MCF 10A (cell line): ENCODE measurements at regions of chr12 and their contacts with region 1.

Region 1: DNA sequence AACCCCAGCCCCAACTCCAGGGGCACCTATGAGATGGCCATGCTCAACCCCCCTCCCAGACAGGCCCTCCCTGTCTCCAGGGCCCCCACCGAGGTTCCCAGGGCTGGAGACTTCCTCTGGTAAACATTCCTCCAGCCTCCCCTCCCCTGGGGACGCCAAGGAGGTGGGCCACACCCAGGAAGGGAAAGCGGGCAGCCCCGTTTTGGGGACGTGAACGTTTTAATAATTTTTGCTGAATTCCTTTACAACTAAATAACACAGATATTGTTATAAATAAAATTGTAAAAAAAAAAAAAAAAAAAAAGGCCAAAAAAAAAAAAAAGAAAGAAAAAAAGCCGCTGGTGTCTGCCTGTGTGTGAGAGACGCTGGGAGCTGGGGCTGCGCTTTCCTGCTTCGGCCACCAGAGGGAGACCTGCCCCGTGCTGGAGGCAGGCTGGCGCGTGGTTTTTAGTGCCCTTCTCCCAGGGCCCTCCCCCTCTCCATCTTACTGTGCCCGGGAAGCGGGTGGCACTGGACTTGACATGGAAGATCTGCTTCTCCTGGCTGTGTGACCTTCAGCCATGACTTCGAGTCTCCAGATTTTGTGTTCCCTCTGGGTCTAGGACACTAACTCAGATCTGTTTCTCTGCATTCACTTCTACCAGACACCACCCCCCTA is 3.4 kb upstream of the NXPH4 start:
- DNase-seq: peak; percentile 82
- H3K4me3 Mint-ChIP-seq: no peak overlapping the region
- H3K27ac Mint-ChIP-seq: no peak overlapping the region
- H3K4me1 Mint-ChIP-seq: peaks cover 20% of the 10 kb centered on the region
- H3K27me3 Mint-ChIP-seq: peaks cover 30% of the 10 kb centered on the region
- CTCF ChIP-seq: peak; percentile 92

Region 2: GRCh38 chr12:57190037-57190436 is 23.1 kb before region 1 on chr12:
- CTCF ChIA-PET with region 1: interaction called, 19 read pairs
- POLR2A ChIA-PET with region 1: interaction called, 3 read pairs
- intact Hi-C with region 1: no loop called
- DNase-seq: no peak
- H3K4me3 Mint-ChIP-seq: no peak overlapping the region
- H3K27ac Mint-ChIP-seq: no peak overlapping the region
- H3K4me1 Mint-ChIP-seq: no peaks in the 10 kb centered on the region
- H3K27me3 Mint-ChIP-seq: no peaks in the 10 kb centered on the region
- CTCF ChIP-seq: no peak

Region 3: DNA sequence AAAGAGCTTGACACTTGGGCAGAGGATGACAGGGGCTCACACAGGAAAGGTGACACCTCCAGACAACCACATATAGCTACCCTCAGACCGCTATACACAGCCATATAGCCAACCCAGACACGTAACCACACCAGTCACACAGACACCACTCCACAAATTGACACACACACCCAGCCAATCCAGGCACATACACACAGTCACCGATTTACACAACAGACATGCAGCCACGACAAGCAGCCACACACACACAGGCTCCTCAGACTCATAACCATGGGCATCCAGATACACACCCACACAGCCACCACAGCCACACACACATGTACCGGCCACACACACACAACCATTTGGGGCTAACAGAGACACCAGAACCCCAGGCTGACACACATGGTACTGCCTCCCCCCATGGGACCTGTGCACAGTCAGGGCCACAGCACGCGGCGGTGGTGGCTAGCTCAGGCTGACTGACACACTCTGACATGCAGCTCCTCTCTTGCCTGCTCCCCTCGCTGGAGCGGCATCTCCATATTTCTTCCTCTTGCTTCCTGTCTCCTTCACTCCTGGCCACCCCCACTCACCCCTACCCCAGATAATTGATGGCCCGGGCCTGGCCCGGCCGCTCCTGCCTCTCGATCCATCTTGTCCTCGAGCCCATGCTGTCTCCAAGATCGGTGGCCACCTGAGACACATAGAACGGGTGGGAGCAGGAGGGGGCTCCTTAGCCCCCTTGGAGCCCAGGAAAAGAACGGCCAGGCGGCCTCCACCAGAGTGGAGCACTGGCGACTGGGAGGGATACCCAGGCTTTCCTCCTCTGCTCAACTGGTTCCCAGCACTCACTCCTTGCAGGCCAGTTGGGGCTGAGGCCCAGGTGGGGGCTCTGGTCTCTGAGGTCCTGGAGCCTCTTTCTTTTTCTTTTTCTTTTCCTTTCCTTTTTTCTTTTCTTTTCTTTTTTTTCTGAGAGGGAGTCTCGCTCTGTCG is 10.3 kb after region 1 on chr12:
- CTCF ChIA-PET with region 1: interaction called, 30 read pairs
- POLR2A ChIA-PET with region 1: no interaction called
- intact Hi-C with region 1: no loop called
- DNase-seq: no peak
- H3K4me3 Mint-ChIP-seq: no peak overlapping the region
- H3K27ac Mint-ChIP-seq: no peak overlapping the region
- H3K4me1 Mint-ChIP-seq: peaks cover 12% of the 10 kb centered on the region
- H3K27me3 Mint-ChIP-seq: peaks cover 40% of the 10 kb centered on the region
- CTCF ChIP-seq: no peak

Region 4: DNA sequence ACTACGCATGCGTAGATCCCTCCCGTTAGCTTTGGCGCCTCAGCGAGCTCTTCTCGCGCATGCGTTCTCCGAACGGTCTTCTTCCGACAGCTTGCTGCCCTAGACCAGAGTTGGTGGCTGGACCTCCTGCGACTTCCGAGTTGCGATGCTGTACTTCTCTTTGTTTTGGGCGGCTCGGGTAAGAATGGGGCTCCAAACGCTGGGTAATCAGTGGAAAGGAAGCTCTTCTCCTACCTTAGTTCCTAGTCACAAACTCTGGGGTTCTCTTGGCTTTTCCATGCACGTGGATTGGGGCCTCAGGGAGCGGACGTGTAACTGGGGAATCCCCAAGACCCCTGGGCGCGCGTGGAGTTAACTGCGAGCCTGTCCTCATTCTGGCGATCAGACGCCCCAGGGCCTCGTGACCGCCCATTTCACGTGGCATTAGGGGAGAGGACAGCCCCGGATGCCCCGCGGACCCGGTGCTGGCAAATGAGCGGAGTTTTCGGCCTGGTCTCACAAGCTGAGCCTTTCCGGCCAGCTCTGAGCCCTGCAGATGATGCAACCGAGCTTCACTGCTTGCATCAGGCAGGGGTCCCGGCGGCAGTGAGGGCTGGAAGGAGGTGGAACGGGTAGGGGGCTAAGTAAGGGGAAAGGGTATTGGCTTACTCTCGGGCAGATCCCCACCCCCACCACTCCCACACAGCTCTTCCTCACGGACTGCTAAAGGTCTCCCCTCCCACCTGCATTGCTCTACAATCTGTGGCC is 16.6 kb after region 1 on chr12 and contains the start of gene SHMT2:
- CTCF ChIA-PET with region 1: interaction called, 62 read pairs
- POLR2A ChIA-PET with region 1: interaction called, 6 read pairs
- intact Hi-C with region 1: no loop called
- DNase-seq: peak; percentile 95
- H3K4me3 Mint-ChIP-seq: peak within 1 kb of the TSS; percentile 98
- H3K27ac Mint-ChIP-seq: peak within 1 kb of the TSS; percentile 99
- H3K4me1 Mint-ChIP-seq: peaks cover 20% of the 10 kb centered on the region
- H3K27me3 Mint-ChIP-seq: no peaks in the 10 kb centered on the region
- CTCF ChIP-seq: no peak
- total RNA-seq, gene SHMT2: 375 and 421 TPM in 2 replicates

Region 5: DNA sequence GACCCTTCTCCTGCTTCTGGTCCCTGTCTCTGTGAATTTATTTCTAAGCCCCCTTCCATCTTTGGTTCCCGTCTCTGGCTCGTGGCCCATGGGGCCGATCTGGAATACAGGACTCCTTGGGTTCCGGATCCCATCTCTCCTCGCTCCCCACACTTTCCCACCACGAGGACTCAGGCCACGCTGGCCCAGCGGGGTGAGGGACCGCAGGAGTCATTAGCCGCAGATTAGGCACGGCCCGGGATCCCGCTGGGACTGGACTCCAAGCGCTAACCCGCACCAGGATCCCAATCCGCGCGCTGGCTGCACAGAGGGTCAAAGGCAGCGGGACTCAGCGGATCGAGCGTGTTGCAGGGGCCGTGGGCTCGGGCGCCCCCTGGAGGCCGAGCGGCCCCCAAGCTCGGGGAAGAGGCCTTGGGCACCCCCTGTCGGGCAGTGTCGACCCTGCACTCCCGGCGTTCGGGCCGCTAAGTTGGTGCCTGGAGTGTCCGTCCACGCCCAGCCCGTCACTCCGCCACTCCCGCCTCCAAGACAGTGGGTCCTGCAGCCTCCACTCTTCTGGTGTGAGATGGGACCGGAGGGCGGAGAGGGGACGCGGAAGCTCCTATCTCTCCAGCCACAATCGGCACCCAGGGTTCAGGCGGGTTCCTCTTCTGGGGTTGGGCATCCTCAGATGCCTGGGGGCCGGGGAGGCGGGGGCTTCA is 25.8 kb after region 1 on chr12:
- CTCF ChIA-PET with region 1: interaction called, 188 read pairs
- POLR2A ChIA-PET with region 1: interaction called, 12 read pairs
- intact Hi-C with region 1: loop called (anchors 1 kb)
- DNase-seq: peak; percentile 84
- H3K4me3 Mint-ChIP-seq: peak overlapping the region; percentile 68
- H3K27ac Mint-ChIP-seq: peak overlapping the region; percentile 4
- H3K4me1 Mint-ChIP-seq: peaks cover 46% of the 10 kb centered on the region
- H3K27me3 Mint-ChIP-seq: no peaks in the 10 kb centered on the region
- CTCF ChIP-seq: peak; percentile 100